Lower leg skin (tissue), 4 donors: ENCODE measurements at regions of chr3 and their contacts with region 1.

Region 1: DNA sequence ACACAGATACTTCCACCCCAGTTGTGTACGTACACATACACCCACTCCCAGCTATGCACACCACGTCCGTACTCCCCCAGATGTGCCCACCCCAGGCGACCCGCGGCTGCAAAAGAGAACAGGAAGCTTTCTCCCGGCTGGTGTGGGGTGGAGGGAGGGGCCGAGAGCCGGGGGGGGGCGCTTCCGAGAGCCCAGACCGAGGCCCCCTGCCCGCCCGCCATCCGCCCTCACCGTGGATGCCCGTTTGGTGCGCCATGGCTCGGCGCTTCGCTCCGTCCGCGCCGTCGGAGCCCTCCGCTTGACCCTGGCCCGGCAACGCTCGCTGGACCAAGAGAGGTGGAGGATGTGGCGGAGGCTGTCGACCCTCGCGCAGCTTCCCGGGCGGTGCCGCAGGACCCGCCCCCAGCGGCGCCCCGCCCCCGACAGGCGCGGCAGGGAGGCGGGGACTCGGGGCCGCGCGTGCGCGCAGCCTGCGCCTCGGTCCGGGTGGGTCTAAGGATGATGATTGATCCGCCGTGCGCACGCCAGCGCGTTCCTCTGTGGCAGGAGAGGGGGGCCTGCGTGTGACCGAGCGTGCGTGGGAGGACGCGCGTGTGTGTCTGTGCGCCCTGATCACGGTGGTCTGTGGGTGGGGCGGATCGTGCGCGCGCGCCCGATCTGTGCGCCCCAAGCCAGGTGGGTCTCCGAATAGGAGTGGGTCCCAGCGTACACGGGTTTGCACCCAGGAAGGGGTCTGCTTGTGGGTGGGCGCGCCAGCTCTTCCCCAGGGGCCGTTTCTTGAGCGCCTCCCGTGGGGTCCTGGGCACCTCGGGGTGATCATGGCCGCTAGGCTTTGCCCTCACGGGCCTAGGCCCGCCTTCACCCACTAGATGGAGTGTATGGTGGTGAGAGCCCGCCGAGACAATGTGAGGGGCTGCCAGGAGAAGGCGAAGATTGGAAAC is at the start of gene TWF2:
- DNase-seq: peak; percentile 60 to 93
- H3K4me3 ChIP-seq: peak within 1 kb of the TSS; percentile 73
- CTCF ChIP-seq: no peak
- POLR2A ChIP-seq: no peak
- total RNA-seq, gene TWF2: 39.3 to 60.2 (median 52.0) TPM

Region 2: GRCh38 chr3:52280050-52280461 is 41.0 kb after region 1 on chr3:
- intact Hi-C with region 1: loop called (anchors 10 kb)
- DNase-seq: no peak
- H3K4me3 ChIP-seq: no peak overlapping the region
- CTCF ChIP-seq: no peak
- POLR2A ChIP-seq: no peak

Region 3: GRCh38 chr3:52323526-52324295 is 84.7 kb after region 1 on chr3:
- intact Hi-C with region 1: no loop called
- DNase-seq: no peak
- H3K4me3 ChIP-seq: no peak overlapping the region
- CTCF ChIP-seq: no peak
- POLR2A ChIP-seq: no peak